GM10248 (cell line): ENCODE measurements at regions of chr11 and their contacts with region 1.

Region 1: GRCh38 chr11:65013692-65014145 is 241 bp upstream of the ARL2 start:
- DNase-seq: peak; percentile 96
- CTCF ChIP-seq: peak; percentile 76

Region 2: GRCh38 chr11:64990222-64990923 is 23.3 kb before region 1 on chr11:
- CTCF ChIA-PET with region 1: interaction called, 34 read pairs
- POLR2A ChIA-PET with region 1: no interaction called
- DNase-seq: no peak
- CTCF ChIP-seq: no peak

Region 3: GRCh38 chr11:65003282-65003681 is 10.4 kb before region 1 on chr11:
- CTCF ChIA-PET with region 1: interaction called, 34 read pairs
- POLR2A ChIA-PET with region 1: no interaction called
- DNase-seq: no peak
- CTCF ChIP-seq: no peak

Region 4: DNA sequence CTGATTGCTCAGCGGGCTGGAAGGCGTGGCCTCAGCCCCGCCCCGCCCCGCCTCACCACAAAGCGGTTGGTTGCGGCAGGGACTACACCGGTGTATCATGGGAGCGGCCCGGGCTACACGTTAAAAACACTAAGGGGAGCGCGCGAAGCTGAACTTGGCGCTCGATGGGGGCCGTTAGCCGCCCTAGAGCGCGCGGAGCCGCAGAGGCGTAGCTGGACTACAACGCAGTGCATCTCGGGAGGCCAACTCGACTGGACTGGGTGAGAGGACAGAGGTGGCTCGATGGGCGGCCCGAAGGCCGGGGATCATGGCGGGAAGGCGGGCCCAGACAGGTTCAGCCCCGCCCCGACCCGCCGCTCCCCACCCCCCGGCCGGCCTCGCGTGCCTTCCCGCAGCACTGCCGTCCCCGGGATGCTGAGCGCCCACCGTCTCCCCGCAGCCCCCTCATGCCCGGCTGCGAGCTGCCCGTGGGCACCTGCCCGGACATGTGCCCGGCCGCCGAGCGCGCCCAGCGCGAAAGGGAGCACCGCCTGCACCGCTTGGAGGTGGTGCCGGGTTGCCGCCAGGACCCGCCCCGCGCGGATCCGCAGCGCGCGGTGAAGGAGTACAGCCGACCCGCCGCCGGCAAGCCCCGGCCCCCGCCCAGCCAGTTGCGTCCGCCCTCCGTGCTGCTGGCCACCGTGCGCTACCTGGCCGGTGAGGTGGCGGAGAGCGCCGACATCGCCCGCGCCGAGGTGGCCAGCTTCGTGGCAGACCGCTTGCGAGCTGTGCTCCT is 27.3 kb after region 1 on chr11 and contains the start of gene SAC3D1:
- CTCF ChIA-PET with region 1: interaction called, 46 read pairs
- POLR2A ChIA-PET with region 1: no interaction called
- DNase-seq: peak; percentile 96
- CTCF ChIP-seq: no peak

Region 5: GRCh38 chr11:65083834-65084597 is 70.3 kb after region 1 on chr11 and contains the starts of genes CDCA5 and ZFPL1:
- CTCF ChIA-PET with region 1: interaction called, 10 read pairs
- POLR2A ChIA-PET with region 1: no interaction called
- DNase-seq: peak; percentile 99
- CTCF ChIP-seq: no peak

Region 6: DNA sequence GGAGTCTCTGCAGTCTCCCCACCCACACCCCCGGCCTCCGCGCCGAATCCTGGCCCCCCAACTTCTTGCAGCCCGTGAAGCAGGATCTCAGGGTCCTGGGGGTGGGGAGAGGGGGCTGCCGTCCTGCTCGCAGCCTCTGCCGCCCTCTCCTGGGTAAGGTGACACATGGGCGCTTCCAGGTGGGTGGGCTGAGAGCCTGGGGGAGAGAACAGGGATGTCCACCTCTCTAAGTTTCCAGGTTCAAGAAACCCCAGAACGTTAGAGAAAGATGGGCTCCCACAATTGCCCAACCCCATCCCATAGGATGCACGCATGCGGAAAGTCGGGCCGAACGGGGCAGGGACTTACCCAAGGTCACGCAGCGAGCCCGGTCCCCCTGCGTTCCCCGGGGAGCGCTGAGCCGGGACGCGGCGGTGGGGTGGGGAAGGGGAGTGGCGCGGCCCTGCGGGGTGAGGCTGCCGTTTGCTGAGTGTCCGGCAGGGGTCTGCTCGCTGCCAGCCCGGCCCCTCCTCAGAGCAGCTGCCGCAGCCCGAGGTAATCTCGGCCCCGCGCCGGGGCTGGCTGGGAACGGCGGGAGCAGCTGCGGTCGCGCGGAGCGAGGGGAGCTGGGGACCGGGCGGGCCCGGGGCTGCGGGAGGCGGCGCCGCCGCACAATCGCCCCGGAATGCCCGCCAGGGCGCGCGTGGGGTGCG is 167.3 kb after region 1 on chr11:
- CTCF ChIA-PET with region 1: interaction called, 18 read pairs
- POLR2A ChIA-PET with region 1: no interaction called
- DNase-seq: peak; percentile 78
- CTCF ChIP-seq: peak; percentile 80

Region 7: DNA sequence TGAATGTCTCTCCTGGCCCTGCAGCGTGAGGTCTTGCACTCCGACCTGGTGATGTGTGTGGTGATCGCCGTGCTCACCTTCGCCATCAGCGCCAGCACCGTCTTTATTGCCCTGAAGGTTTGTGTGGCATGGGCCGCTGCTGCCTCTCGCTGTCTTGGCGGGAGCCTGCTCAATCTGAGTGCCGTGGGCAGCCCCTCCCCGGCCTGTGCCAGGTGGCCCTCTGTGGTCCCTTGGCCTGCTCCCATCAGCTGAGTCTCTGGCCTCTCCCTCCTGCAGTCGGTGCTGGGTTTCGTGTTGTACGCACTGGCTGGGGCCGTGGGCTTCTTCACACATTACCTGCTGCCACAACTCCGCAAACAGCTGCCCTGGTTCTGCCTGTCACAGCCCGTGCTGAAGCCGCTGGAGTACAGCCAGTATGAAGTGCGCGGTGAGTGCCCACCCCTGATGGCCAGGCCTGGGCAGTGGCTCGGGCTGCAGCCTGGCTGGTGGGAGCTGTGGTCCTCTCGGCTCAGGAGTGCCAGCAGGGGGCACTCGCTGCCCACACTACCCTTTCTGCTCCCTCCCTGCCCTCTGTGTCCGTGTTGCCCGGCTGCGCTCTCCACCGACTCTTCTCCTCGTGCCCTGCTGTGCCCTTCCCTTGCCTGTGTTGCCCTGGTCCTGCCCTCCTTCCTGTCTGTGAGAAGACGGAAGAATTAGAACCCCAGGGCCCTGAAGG is 612.1 kb after region 1 on chr11:
- CTCF ChIA-PET with region 1: no interaction called
- POLR2A ChIA-PET with region 1: no interaction called
- DNase-seq: peak; percentile 84
- CTCF ChIP-seq: peak; percentile 71